CD8-positive, alpha-beta T cell (primary cell): ENCODE measurements at regions of chr1 and their contacts with region 1.

Region 1: DNA sequence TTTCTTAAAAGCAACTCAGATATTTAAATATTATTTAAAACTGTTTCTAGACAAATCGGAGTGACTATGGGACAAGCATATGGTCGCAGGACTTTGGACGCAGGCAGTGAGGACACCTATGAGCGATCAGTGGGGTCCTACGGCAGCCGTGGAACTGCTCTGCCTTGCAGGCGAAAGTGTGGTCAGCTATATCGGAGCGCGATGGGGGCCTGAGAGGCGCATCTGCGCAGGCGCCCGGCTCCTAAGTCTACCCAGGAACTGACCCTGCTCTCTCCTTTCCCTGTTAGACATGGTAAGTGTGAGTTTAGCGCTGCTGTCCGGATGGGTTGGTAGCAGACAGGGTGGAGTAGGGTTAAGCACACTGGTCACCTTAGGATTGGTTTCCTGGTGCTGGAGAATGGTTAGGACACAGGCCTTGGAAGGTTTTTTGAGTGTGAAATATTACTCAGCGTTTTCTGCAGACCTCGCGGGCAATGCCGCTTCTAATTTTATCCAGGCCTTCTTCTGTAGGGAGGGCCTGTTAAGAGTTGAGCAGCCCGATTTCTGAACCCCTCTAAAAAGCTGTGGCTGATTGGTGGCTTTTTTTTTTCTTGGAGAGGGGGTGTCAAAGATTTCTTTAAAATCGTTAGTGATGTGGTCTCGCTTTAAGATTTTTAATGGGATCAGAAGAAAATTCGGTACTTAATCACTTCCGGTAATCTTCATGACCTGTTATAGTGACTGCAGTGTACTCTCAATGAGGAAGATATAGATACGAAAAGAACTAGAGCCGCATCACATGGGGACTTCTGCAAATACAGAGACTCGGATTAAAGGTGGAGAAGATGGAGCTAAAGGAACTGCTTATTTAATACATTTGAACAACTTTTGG is at the start of gene RABGGTB:
- DNase-seq: peak; percentile 89 to 97 (median 91)
- ATAC-seq: peak; percentile 97
- H3K4me3 ChIP-seq: peak within 1 kb of the TSS; percentile 73
- H3K4me3 Mint-ChIP-seq: peak within 1 kb of the TSS; percentile 96
- H3K27ac ChIP-seq: peak within 1 kb of the TSS; percentile 69 to 89
- H3K27ac Mint-ChIP-seq: peak within 1 kb of the TSS; percentile 97
- H3K4me1 ChIP-seq: peaks cover 46% of the 10 kb centered on the region
- H3K4me1 Mint-ChIP-seq: peaks cover 58% of the 10 kb centered on the region
- H3K27me3 ChIP-seq: no peaks in the 10 kb centered on the region
- H3K27me3 Mint-ChIP-seq: no peaks in the 10 kb centered on the region
- CTCF ChIP-seq: no peak
- total RNA-seq, gene RABGGTB: 186 to 193 TPM

Region 2: DNA sequence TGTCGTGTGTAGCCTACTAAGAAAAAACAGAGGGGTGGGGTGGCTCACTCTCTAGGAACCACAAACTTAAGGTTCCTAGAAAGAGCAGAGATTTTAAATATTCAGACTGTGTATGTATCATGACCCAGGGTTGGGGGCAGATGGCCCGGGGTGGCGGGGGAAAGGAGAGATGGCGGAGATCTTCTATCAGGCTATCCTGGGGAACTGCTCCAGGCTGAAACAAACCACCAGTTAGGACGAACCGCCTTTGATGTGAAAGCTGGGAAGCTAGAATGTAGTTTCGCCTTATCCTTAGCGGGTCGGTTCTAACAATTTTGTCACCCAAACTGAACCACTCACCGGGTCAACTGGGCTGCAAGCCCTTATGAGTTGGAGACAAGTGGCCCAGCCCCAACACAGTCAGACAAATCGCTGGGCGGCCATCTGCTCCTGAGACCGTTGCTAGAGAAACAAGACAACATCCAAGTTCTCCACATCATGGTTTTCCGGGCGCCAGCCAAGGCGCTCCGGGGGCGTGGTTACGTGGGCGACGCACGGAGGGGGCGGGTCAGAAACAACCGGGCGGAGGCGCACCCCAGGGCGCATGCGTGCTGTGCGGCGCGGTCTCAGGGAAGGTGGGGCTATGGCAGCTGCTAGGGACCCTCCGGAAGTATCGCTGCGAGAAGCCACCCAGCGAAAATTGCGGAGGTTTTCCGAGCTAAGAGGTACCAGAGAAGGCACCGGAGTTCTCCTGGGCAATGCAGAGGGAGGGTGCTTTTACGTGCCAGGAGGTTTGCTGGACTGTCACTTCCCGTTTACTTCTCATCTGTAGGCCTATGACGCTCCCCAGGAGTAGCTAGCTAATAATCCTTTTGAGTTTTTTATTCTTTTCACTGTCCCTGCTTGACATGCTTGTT is 1588.3 kb before region 1 on chr1 and contains the starts of genes FPGT and LRRIQ3:
- CTCF ChIA-PET with region 1: no interaction called
- POLR2A ChIA-PET with region 1: no interaction called
- intact Hi-C with region 1: loop called (anchors 5 kb)
- DNase-seq: peak; percentile 92 to 98 (median 95)
- ATAC-seq: peak; percentile 96
- H3K4me3 ChIP-seq: peak within 1 kb of the TSS; percentile 62 to 82
- H3K4me3 Mint-ChIP-seq: peak within 1 kb of the TSS; percentile 89
- H3K27ac ChIP-seq: peak within 1 kb of the TSS; percentile 79 to 82
- H3K27ac Mint-ChIP-seq: peak within 1 kb of the TSS; percentile 91
- H3K4me1 ChIP-seq: peaks cover 18% of the 10 kb centered on the region
- H3K4me1 Mint-ChIP-seq: peaks cover 21% of the 10 kb centered on the region
- H3K27me3 ChIP-seq: no peaks in the 10 kb centered on the region
- H3K27me3 Mint-ChIP-seq: no peaks in the 10 kb centered on the region
- CTCF ChIP-seq: no peak
- total RNA-seq, gene FPGT: 1.7 to 2.0 TPM
- total RNA-seq, gene LRRIQ3: not detected

Region 3: DNA sequence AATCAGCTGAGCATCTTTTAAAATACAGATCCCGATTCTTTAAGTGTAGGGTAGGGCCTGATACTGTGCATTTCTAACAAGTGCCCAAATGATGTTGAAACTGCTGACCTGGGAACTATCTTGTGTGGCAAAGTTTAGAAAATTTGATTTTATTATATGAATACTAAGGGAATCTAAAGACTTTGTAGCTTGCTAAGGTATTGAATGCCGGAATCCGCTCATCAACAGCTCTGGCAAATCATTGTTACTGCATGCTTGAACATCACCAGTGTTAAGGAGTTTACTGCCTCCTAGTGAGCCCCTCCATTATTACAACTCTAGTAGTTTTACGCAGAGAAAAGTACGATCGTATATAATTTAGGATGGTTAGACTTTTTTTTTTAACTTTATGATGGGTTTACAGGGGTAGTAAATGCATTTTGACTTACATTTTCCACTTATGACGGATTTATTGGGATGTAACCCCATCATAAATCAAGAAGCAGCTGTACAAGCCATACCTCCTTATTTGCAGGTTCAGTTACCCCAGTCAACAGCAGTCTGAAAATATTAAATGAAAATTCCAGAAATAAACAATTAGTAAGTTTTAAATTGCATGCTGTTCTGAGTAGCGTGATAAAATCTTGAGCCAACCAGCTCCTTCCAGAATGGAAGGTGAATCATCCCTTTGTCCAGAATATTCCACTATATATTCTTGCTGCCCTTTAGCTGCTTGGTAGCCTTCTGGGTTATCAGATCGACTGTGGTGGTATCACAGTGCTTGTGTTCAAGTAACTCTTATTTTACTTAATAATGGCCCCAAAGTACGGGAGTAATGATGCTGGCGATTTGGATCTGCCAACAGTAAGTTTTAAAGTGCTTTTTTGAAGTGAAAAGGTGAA is 1052.4 kb before region 1 on chr1:
- CTCF ChIA-PET with region 1: no interaction called
- POLR2A ChIA-PET with region 1: no interaction called
- intact Hi-C with region 1: loop called in 1 of 2 experiments (anchors 5 kb)
- DNase-seq: peak in 5 of 9 experiments; percentile 10 to 83 (median 39)
- ATAC-seq: peak; percentile 67
- H3K4me3 ChIP-seq: peak overlapping the region; percentile 79 to 89
- H3K4me3 Mint-ChIP-seq: peak overlapping the region; percentile 98
- H3K27ac ChIP-seq: peak overlapping the region; percentile 75 to 83
- H3K27ac Mint-ChIP-seq: peak overlapping the region; percentile 95
- H3K4me1 ChIP-seq: peaks cover 21% of the 10 kb centered on the region
- H3K4me1 Mint-ChIP-seq: peaks cover 35% of the 10 kb centered on the region
- H3K27me3 ChIP-seq: no peaks in the 10 kb centered on the region
- H3K27me3 Mint-ChIP-seq: no peaks in the 10 kb centered on the region
- CTCF ChIP-seq: peak; percentile 84

Region 4: GRCh38 chr1:75724472-75725022 is 61.7 kb before region 1 on chr1 and contains the start of gene ACADM:
- CTCF ChIA-PET with region 1: no interaction called
- POLR2A ChIA-PET with region 1: interaction called, 3 read pairs
- intact Hi-C with region 1: loop called (anchors 1 kb)
- DNase-seq: peak; percentile 58 to 90 (median 79)
- ATAC-seq: peak; percentile 96
- H3K4me3 ChIP-seq: peak within 1 kb of the TSS; percentile 98
- H3K4me3 Mint-ChIP-seq: peak within 1 kb of the TSS; percentile 98
- H3K27ac ChIP-seq: peak within 1 kb of the TSS; percentile 78 to 82
- H3K27ac Mint-ChIP-seq: peak within 1 kb of the TSS; percentile 97
- H3K4me1 ChIP-seq: peaks cover 34% of the 10 kb centered on the region
- H3K4me1 Mint-ChIP-seq: peaks cover 60% of the 10 kb centered on the region
- H3K27me3 ChIP-seq: no peaks in the 10 kb centered on the region
- H3K27me3 Mint-ChIP-seq: no peaks in the 10 kb centered on the region
- CTCF ChIP-seq: no peak
- total RNA-seq, gene ACADM: 5.8 to 6.0 TPM

Region 5: DNA sequence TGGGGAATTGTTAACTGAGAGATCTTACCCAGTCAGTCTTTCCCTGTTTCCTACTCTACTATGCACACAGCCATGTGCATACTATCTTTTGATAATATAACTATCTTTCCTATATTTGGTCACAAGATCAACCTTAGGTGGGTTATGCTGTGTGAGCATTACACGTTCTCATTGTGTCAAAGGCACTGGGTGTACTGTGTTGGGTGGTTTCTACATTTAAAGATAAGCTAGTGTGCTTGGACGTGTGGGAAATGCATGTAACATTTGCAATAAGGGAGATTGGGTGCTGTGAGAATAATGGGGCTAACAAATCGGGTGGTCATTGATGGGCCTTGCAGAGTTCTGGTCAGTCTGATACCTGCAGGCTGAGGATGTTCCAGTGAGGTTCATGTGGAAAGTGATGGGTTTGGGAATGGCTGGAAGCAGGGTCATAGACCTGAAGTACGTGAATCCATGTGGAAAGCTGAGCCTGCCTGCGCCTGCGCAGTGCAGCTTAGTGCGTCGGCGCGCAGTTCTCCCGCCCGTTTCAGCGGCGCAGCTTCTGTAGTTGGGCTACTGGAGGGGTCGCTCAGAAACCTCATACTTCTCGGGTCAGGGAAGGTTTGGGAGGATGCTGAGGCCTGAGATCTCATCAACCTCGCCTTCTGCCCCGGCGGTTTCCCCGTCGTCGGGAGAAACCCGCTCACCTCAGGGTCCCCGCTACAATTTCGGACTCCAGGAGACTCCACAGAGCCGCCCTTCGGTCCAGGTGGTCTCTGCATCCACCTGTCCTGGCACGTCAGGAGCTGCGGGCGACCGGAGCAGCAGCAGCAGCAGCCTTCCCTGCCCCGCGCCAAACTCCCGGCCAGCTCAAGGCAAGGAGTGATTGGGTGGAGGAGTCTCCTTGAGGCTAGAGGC is 10.4 kb after region 1 on chr1 and contains the start of gene MSH4:
- CTCF ChIA-PET with region 1: no interaction called
- POLR2A ChIA-PET with region 1: interaction called, 17 read pairs
- intact Hi-C with region 1: no loop called
- DNase-seq: peak in 1 of 9 experiments; percentile 7
- ATAC-seq: no peak
- H3K4me3 ChIP-seq: no peak within 1 kb of the TSS
- H3K4me3 Mint-ChIP-seq: no peak within 1 kb of the TSS
- H3K27ac ChIP-seq: no peak within 1 kb of the TSS
- H3K27ac Mint-ChIP-seq: peak within 1 kb of the TSS; percentile 61
- H3K4me1 ChIP-seq: no peaks in the 10 kb centered on the region
- H3K4me1 Mint-ChIP-seq: peaks cover 15% of the 10 kb centered on the region
- H3K27me3 ChIP-seq: no peaks in the 10 kb centered on the region
- H3K27me3 Mint-ChIP-seq: no peaks in the 10 kb centered on the region
- CTCF ChIP-seq: no peak
- total RNA-seq, gene MSH4: 0.08 TPM in 1 of 2 experiments, not detected in the other

Region 6: DNA sequence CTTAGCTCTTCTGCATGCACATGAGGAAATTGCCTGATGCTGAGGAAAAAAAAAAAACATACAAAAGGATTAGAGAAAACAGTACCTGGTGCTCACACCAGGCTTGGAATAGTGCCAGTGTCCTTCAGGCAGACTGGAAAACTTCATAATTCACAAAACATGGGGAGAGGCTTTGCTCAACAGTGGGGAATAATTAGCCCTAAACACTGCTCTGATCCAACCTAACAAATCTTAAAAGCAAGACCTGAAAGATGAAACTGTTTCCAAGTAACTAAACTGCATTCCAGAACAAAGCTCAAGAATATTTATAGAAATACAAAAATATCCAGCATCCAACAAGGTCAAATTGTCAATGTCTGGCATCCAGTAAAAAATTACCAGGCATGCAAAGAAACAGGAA is 1620.4 kb after region 1 on chr1:
- CTCF ChIA-PET with region 1: no interaction called
- POLR2A ChIA-PET with region 1: no interaction called
- intact Hi-C with region 1: no loop called
- DNase-seq: no peak
- ATAC-seq: no peak
- H3K4me3 ChIP-seq: no peak overlapping the region
- H3K4me3 Mint-ChIP-seq: no peak overlapping the region
- H3K27ac ChIP-seq: no peak overlapping the region
- H3K27ac Mint-ChIP-seq: no peak overlapping the region
- H3K4me1 ChIP-seq: no peaks in the 10 kb centered on the region
- H3K4me1 Mint-ChIP-seq: peaks cover 6% of the 10 kb centered on the region
- H3K27me3 ChIP-seq: no peaks in the 10 kb centered on the region
- H3K27me3 Mint-ChIP-seq: peaks cover 2% of the 10 kb centered on the region
- CTCF ChIP-seq: no peak

Region 7: GRCh38 chr1:77759071-77760028 is 1973.1 kb after region 1 on chr1 and contains the start of gene USP33:
- CTCF ChIA-PET with region 1: no interaction called
- POLR2A ChIA-PET with region 1: no interaction called
- intact Hi-C with region 1: loop called in 1 of 2 experiments (anchors 5 kb)
- DNase-seq: peak; percentile 81 to 96 (median 89)
- ATAC-seq: peak; percentile 95
- H3K4me3 ChIP-seq: peak within 1 kb of the TSS; percentile 79 to 98
- H3K4me3 Mint-ChIP-seq: peak within 1 kb of the TSS; percentile 90
- H3K27ac ChIP-seq: peak within 1 kb of the TSS; percentile 70 to 88
- H3K27ac Mint-ChIP-seq: peak within 1 kb of the TSS; percentile 90
- H3K4me1 ChIP-seq: peaks cover 44% of the 10 kb centered on the region
- H3K4me1 Mint-ChIP-seq: peaks cover 45% of the 10 kb centered on the region
- H3K27me3 ChIP-seq: no peaks in the 10 kb centered on the region
- H3K27me3 Mint-ChIP-seq: no peaks in the 10 kb centered on the region
- CTCF ChIP-seq: no peak
- total RNA-seq, gene USP33: 72.1 to 72.2 TPM

Region 8: DNA sequence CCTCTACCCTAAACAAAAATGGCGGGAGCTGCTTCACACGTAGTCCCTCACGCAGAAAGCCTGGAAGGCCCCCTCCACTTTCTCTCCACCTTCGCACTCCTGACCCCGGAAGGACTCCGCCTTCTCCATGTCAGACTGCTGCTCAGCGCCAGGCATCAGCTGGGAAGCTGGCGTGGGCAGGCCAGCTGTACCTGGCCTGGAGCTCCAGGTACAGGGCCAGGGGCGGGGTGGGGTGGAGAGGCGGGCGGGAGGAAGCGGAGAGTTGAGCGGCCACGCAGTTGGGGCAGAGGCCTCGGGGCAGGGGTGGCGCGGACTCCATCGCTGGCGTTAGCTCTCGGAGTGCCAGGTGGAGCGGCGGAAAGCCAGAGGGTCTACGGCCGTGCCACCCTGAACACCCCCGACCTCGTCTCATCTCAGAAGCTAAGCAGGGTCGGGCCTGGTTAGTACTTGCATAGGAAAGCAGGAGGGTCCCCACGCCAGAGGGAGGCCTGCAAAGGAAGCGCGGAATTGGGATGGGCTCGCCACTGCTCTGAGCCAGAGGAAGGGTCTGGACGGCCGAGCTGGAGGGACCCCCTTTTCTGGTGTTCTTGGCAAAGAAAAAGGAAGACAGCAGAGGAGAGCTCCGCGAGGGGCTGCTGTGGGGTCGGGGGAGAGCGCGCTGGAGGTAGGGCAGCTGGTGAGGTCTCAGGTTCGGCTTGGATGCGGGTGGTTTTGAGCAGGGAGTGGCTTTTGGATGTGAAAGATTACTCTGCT is 1993.5 kb after region 1 on chr1 and contains the start of gene MIGA1:
- CTCF ChIA-PET with region 1: no interaction called
- POLR2A ChIA-PET with region 1: interaction called, 3 read pairs
- intact Hi-C with region 1: loop called in 1 of 2 experiments (anchors 2 kb)
- DNase-seq: peak; percentile 73 to 96 (median 89)
- ATAC-seq: peak; percentile 97
- H3K4me3 ChIP-seq: peak within 1 kb of the TSS; percentile 86 to 90
- H3K4me3 Mint-ChIP-seq: peak within 1 kb of the TSS; percentile 97
- H3K27ac ChIP-seq: peak within 1 kb of the TSS; percentile 61 to 65
- H3K27ac Mint-ChIP-seq: peak within 1 kb of the TSS; percentile 90
- H3K4me1 ChIP-seq: peaks cover 28% of the 10 kb centered on the region
- H3K4me1 Mint-ChIP-seq: peaks cover 41% of the 10 kb centered on the region
- H3K27me3 ChIP-seq: no peaks in the 10 kb centered on the region
- H3K27me3 Mint-ChIP-seq: no peaks in the 10 kb centered on the region
- CTCF ChIP-seq: no peak
- total RNA-seq, gene MIGA1: 11.8 to 13.5 TPM